Ovary (tissue), 10 donors: ENCODE measurements at regions of chr3 and their contacts with region 1.

Region 1: DNA sequence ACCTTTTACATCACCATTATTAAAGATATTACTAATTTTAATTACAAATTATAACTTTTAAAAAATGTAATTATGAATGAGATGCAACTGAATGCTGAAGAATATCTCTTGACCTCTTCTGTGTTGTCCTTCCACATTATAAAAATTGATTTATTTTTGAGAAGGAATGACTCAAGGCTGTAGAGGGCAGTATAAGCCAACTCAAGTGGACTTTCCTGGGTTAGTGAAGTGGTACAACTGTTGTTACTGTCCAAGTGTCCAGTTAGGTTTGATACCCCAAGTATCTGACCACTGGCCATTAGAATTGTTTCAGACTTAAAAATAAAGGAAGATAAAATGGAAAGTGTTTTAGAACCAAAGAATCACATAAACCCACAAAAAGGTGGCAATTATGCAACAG is 51.9 kb downstream of the BBX start:
- DNase-seq: no peak
- H3K4me3 ChIP-seq: no peak overlapping the region
- H3K27ac ChIP-seq: no peak overlapping the region
- H3K4me1 ChIP-seq: no peaks in the 10 kb centered on the region
- H3K27me3 ChIP-seq: no peaks in the 10 kb centered on the region
- CTCF ChIP-seq: no peak
- EP300 ChIP-seq: no peak
- POLR2A ChIP-seq: no peak

Region 2: GRCh38 chr3:107704477-107704876 is 129.8 kb after region 1 on chr3:
- intact Hi-C with region 1: no loop called
- DNase-seq: no peak
- H3K4me3 ChIP-seq: no peak overlapping the region
- H3K27ac ChIP-seq: no peak overlapping the region
- H3K4me1 ChIP-seq: no peaks in the 10 kb centered on the region
- H3K27me3 ChIP-seq: no peaks in the 10 kb centered on the region
- CTCF ChIP-seq: no peak
- EP300 ChIP-seq: no peak
- POLR2A ChIP-seq: no peak

Region 3: DNA sequence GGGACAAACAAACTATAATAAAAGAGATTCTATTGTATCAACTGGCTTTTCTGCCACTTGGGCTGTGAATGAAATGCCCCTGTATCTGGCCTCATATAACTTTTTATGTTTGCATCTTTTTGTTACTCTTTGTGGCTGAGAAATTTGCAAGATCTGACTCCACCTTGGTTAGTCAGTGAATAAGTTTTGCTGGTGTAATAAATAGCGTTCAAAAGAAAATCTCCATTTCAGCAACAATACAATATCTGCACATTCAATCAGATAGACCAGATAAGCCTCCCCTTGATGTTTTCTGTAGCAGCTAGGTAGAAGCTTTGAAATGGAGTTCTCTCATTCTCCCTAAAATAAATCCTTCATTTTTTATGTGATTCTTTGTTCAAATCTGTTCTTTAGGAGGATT is 1259.9 kb after region 1 on chr3:
- intact Hi-C with region 1: loop called in 1 of 4 experiments (anchors 5 kb)
- DNase-seq: no peak
- H3K4me3 ChIP-seq: no peak overlapping the region
- H3K27ac ChIP-seq: no peak overlapping the region
- H3K4me1 ChIP-seq: no peaks in the 10 kb centered on the region
- H3K27me3 ChIP-seq: no peaks in the 10 kb centered on the region
- CTCF ChIP-seq: no peak
- EP300 ChIP-seq: no peak
- POLR2A ChIP-seq: no peak